ENCODE measurements at regions of chr10 and their contacts with region 1.

Region 1: GRCh38 chr10:13712837-13713581 is 126.2 kb downstream of the PRPF18 start:
- DNase-seq: peak; percentile 82
- ATAC-seq: peak; percentile 91
- H3K4me3 ChIP-seq: peak overlapping the region; percentile 17; the same call in 1 of the 2 replicates
- H3K27ac ChIP-seq: peak overlapping the region; percentile 97
- H3K4me1 ChIP-seq: peaks cover 41% of the 10 kb centered on the region
- H3K27me3 ChIP-seq: no peaks in the 10 kb centered on the region
- CTCF ChIP-seq: no peak
- EP300 ChIP-seq: peak; percentile 18 to 43; a peak in 2 of 4 replicates
- POLR2A ChIP-seq: peak; percentile 59; the same call in 1 of the 2 replicates
- RAD21 ChIP-seq: no peak

Region 2: GRCh38 chr10:13431122-13431521 is 281.9 kb before region 1 on chr10:
- CTCF ChIA-PET with region 1: no interaction called
- POLR2A ChIA-PET with region 1: no interaction called
- RAD21 ChIA-PET with region 1: no interaction called
- SMC1A ChIA-PET with region 1: no interaction called
- in situ Hi-C with region 1: no loop called
- intact Hi-C with region 1: no loop called
- DNase-seq: no peak
- ATAC-seq: no peak
- H3K4me3 ChIP-seq: no peak overlapping the region
- H3K27ac ChIP-seq: no peak overlapping the region
- H3K4me1 ChIP-seq: no peaks in the 10 kb centered on the region
- H3K27me3 ChIP-seq: no peaks in the 10 kb centered on the region; a peak in 1 of 4 replicates
- CTCF ChIP-seq: no peak
- EP300 ChIP-seq: no peak
- POLR2A ChIP-seq: no peak
- RAD21 ChIP-seq: no peak

Region 3: DNA sequence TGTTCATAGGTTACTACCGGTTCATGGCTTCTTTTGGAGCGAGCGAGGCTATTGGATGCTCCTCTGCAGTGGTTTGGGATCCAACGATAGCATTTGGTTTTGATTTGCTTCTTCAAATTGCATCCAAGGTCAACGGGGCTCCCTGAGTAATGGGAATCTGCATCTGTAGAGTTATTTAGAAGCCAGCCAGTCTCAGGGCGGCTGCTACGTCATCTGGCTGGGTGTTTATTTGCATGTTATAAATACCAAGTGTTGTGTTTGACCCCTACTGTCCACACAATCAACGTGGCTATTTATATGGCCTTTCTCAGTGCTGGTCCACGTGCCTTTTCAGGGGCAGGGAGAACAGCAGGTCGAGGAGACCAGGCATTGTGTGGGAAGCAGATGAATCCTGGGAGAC is 11.5 kb after region 1 on chr10:
- CTCF ChIA-PET with region 1: interaction called, 10 read pairs
- POLR2A ChIA-PET with region 1: interaction called, 8 read pairs
- RAD21 ChIA-PET with region 1: interaction called, 10 read pairs
- SMC1A ChIA-PET with region 1: interaction called, 16 read pairs
- in situ Hi-C with region 1: no loop called
- intact Hi-C with region 1: no loop called
- DNase-seq: no peak
- ATAC-seq: no peak
- H3K4me3 ChIP-seq: no peak overlapping the region
- H3K27ac ChIP-seq: no peak overlapping the region
- H3K4me1 ChIP-seq: peaks cover 20% of the 10 kb centered on the region
- H3K27me3 ChIP-seq: no peaks in the 10 kb centered on the region
- CTCF ChIP-seq: no peak
- EP300 ChIP-seq: no peak
- POLR2A ChIP-seq: no peak
- RAD21 ChIP-seq: no peak

Region 4: DNA sequence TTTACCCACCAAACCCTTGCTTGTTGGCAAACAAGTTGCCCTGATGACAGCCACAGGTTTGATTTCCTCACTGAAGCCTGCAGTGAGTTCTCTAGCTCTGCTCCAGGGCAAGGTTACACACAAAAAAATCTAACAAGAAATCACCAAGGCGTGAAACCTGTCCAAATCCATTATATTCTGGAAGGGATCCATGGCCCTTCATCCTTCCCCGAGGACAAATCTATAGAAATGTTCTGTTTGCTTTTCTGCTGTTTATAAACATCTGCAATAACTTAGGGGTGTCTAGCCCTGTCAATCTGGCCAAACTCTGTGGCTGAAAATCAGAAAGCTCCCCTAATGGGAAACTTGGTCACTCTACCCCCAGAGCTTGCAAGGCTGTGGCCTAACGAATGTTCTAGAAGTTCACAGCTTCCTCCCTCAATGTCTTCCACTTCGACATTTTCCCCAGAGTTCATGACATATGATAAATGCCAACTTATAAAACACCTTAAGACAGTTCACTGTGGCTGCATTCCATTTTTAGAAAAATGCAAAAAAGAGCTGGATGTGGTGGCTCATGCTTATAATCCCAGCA is 38.3 kb after region 1 on chr10:
- CTCF ChIA-PET with region 1: interaction called, 3 read pairs
- POLR2A ChIA-PET with region 1: interaction called, 31 read pairs
- RAD21 ChIA-PET with region 1: interaction called, 146 read pairs
- SMC1A ChIA-PET with region 1: interaction called, 81 read pairs
- in situ Hi-C with region 1: no loop called
- intact Hi-C with region 1: loop called (anchors 5 kb)
- DNase-seq: peak; percentile 60
- ATAC-seq: peak; percentile 69
- H3K4me3 ChIP-seq: no peak overlapping the region
- H3K27ac ChIP-seq: peak overlapping the region; percentile 78
- H3K4me1 ChIP-seq: peaks cover 73% of the 10 kb centered on the region
- H3K27me3 ChIP-seq: no peaks in the 10 kb centered on the region
- CTCF ChIP-seq: no peak
- EP300 ChIP-seq: peak in 1 of 2 experiments; percentile 64; a peak in 2 of 4 replicates
- POLR2A ChIP-seq: no peak
- RAD21 ChIP-seq: no peak

Region 5: GRCh38 chr10:13769955-13770354 is 56.9 kb after region 1 on chr10:
- CTCF ChIA-PET with region 1: interaction called, 3 read pairs
- POLR2A ChIA-PET with region 1: interaction called, 18 read pairs
- RAD21 ChIA-PET with region 1: interaction called, 146 read pairs
- SMC1A ChIA-PET with region 1: interaction called, 42 read pairs
- in situ Hi-C with region 1: no loop called
- intact Hi-C with region 1: loop called (anchors 5 kb)
- DNase-seq: no peak
- ATAC-seq: peak; percentile 78
- H3K4me3 ChIP-seq: no peak overlapping the region
- H3K27ac ChIP-seq: no peak overlapping the region
- H3K4me1 ChIP-seq: peaks cover 11% of the 10 kb centered on the region
- H3K27me3 ChIP-seq: no peaks in the 10 kb centered on the region
- CTCF ChIP-seq: no peak
- EP300 ChIP-seq: peak; percentile 14 to 25; a peak in 2 of 4 replicates
- POLR2A ChIP-seq: no peak
- RAD21 ChIP-seq: no peak

Region 6: DNA sequence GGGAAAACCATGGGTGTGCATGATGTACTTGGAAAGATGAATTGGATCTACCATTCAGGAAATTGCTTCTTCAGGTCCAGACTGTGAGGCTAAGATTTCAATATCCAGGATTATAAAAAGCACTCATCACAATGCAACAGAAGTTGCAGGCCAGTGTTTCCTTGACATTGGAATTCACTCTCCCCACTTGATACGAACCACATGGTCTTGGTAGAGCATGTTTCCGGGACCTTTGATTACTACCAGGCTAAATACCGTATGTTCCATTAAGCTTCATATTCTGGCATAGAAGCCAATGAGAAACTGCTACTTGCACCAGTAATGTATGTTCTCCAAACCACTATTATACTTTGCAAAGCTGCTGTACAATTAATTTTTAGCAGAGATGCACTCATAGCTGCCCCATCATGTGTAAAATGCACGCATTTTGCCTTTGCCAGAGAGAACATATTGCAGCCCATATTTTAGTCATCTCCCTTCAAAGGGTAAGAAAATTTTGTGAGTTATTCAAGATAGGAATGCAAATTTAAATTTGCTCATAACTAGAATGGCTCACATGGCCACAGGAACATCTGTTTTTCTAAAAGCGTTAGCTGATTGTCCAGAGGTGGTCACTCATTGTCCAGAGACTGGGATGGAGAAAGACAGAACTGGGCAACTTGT is 609.6 kb after region 1 on chr10:
- CTCF ChIA-PET with region 1: no interaction called
- POLR2A ChIA-PET with region 1: no interaction called
- RAD21 ChIA-PET with region 1: no interaction called
- SMC1A ChIA-PET with region 1: no interaction called
- in situ Hi-C with region 1: no loop called
- intact Hi-C with region 1: no loop called
- DNase-seq: no peak
- ATAC-seq: no peak
- H3K4me3 ChIP-seq: no peak overlapping the region
- H3K27ac ChIP-seq: no peak overlapping the region
- H3K4me1 ChIP-seq: no peaks in the 10 kb centered on the region
- H3K27me3 ChIP-seq: no peaks in the 10 kb centered on the region; a peak in 2 of 4 replicates
- CTCF ChIP-seq: no peak
- EP300 ChIP-seq: no peak
- POLR2A ChIP-seq: no peak
- RAD21 ChIP-seq: no peak

Measured in GM12878 (cell line).